Endothelial cell of umbilical vein (primary cell): ENCODE measurements at regions of chr15 and their contacts with region 1.

Region 1: GRCh38 chr15:63466378-63467192 is 37.8 kb upstream of the USP3 start:
- DNase-seq: peak; percentile 77
- H3K4me3 ChIP-seq: no peak overlapping the region
- H3K27ac ChIP-seq: no peak overlapping the region
- H3K4me1 ChIP-seq: peaks cover 8% of the 10 kb centered on the region
- H3K27me3 ChIP-seq: no peaks in the 10 kb centered on the region
- CTCF ChIP-seq: peak; percentile 54 to 63
- POLR2A ChIP-seq: no peak

Region 2: GRCh38 chr15:62977952-62978811 is 488.4 kb before region 1 on chr15:
- CTCF ChIA-PET with region 1: no interaction called
- POLR2A ChIA-PET with region 1: no interaction called
- dilution Hi-C with region 1: no loop called
- intact Hi-C with region 1: no loop called
- DNase-seq: no peak
- H3K4me3 ChIP-seq: no peak overlapping the region
- H3K27ac ChIP-seq: no peak overlapping the region
- H3K4me1 ChIP-seq: no peaks in the 10 kb centered on the region
- H3K27me3 ChIP-seq: no peaks in the 10 kb centered on the region
- CTCF ChIP-seq: no peak
- POLR2A ChIP-seq: no peak

Region 3: DNA sequence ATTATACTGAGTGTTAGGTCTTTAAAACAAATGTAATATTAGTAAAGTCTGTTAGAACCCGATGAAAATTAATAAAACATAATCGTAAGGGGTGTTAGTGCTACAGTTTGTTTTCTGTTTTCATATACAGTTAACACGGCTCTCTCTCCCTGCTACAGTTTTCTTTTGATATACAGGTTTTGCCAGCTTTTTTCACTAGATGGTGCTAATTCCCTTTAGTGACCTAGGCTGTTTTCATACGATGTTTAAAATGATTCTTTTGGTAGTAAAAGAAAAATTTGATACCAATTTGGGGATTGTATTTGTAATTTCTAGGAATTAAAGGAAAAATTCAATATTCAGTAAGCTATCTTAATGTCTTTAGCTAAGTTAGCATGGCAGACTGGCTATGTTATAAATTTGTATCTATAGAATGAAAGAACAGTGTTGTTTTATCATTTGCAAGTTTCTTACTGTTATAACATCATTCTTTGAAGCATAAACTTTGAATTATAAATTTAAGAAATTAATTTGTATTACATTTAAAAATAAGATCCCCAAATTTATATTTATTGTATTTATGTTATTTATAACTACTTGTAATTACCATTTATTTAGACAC is 177.7 kb before region 1 on chr15:
- CTCF ChIA-PET with region 1: interaction called, 23 read pairs
- POLR2A ChIA-PET with region 1: no interaction called
- dilution Hi-C with region 1: no loop called
- intact Hi-C with region 1: loop called (anchors 2 kb)
- DNase-seq: peak; percentile 80
- H3K4me3 ChIP-seq: no peak overlapping the region
- H3K27ac ChIP-seq: no peak overlapping the region
- H3K4me1 ChIP-seq: peaks cover 46% of the 10 kb centered on the region
- H3K27me3 ChIP-seq: no peaks in the 10 kb centered on the region
- CTCF ChIP-seq: peak; percentile 34 to 41
- POLR2A ChIP-seq: no peak

Region 4: DNA sequence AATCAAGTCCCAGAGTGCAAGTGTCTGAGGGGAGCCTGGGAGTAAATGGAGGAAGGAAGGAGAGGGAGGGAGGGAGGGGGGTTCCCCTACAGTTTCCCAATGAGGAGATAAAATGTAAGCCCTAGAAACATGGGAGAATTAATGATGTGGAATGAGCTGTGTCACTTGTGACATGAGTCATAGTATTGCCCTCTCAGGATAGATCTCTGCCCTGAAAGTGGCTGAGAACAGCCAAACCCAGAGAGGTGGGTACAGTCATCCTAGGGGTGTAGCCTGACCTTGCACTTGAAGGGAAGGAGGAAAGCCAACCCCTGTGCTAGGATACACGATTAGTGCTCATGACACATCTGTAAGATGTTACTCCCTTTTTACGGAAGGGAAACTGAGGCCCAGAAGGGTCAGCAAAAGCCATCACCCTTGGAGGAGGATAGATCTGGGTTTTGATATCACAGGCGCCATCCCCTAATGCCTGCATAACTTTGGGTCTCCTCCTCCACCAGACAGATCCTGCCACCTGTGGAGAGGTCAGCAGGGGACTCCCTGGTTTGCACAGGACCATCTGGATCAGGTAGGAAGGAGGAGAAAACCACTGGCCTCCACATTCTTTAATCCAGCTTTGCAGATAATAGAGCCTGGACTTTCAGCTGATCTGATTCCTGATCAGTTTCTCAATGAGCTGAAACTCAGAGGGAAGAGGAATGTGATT is 14.7 kb after region 1 on chr15:
- CTCF ChIA-PET with region 1: interaction called, 30 read pairs
- POLR2A ChIA-PET with region 1: no interaction called
- dilution Hi-C with region 1: no loop called
- intact Hi-C with region 1: no loop called
- DNase-seq: no peak
- H3K4me3 ChIP-seq: no peak overlapping the region
- H3K27ac ChIP-seq: no peak overlapping the region
- H3K4me1 ChIP-seq: peaks cover 17% of the 10 kb centered on the region
- H3K27me3 ChIP-seq: no peaks in the 10 kb centered on the region
- CTCF ChIP-seq: no peak
- POLR2A ChIP-seq: no peak

Region 5: GRCh38 chr15:63504247-63504978 is 37.8 kb after region 1 on chr15 and contains the start of gene USP3:
- CTCF ChIA-PET with region 1: interaction called, 71 read pairs
- POLR2A ChIA-PET with region 1: interaction called, 11 read pairs
- dilution Hi-C with region 1: no loop called
- intact Hi-C with region 1: loop called (anchors 2 kb)
- DNase-seq: peak; percentile 96
- H3K4me3 ChIP-seq: peak within 1 kb of the TSS; percentile 55 to 87 (median 85)
- H3K27ac ChIP-seq: peak within 1 kb of the TSS; percentile 92
- H3K4me1 ChIP-seq: peaks cover 61% of the 10 kb centered on the region
- H3K27me3 ChIP-seq: no peaks in the 10 kb centered on the region
- CTCF ChIP-seq: peak in 1 of 2 donors; percentile 32
- POLR2A ChIP-seq: peak; percentile 80
- total RNA-seq, gene USP3: 52.4 and 57.2 TPM in 2 replicates

Region 6: GRCh38 chr15:63600616-63601025 is 134.0 kb after region 1 on chr15:
- CTCF ChIA-PET with region 1: interaction called, 78 read pairs
- POLR2A ChIA-PET with region 1: no interaction called
- dilution Hi-C with region 1: no loop called
- intact Hi-C with region 1: loop called (anchors 1 kb)
- DNase-seq: peak; percentile 94
- H3K4me3 ChIP-seq: peak overlapping the region; percentile 56 to 82 (median 71)
- H3K27ac ChIP-seq: no peak overlapping the region
- H3K4me1 ChIP-seq: peaks cover 11% of the 10 kb centered on the region
- H3K27me3 ChIP-seq: no peaks in the 10 kb centered on the region
- CTCF ChIP-seq: peak in 1 of 2 donors; percentile 20
- POLR2A ChIP-seq: peak; percentile 95

Region 7: GRCh38 chr15:64067564-64068030 is 601.0 kb after region 1 on chr15:
- CTCF ChIA-PET with region 1: interaction called, 30 read pairs
- POLR2A ChIA-PET with region 1: no interaction called
- dilution Hi-C with region 1: no loop called
- intact Hi-C with region 1: loop called (anchors 2 kb)
- DNase-seq: peak; percentile 64
- H3K4me3 ChIP-seq: no peak overlapping the region
- H3K27ac ChIP-seq: no peak overlapping the region
- H3K4me1 ChIP-seq: peaks cover 17% of the 10 kb centered on the region
- H3K27me3 ChIP-seq: no peaks in the 10 kb centered on the region
- CTCF ChIP-seq: peak; percentile 63 to 81
- POLR2A ChIP-seq: no peak